Transverse colon (tissue), 4 donors: ENCODE measurements at regions of chrX and their contacts with region 1.

Region 1: GRCh38 chrX:15721911-15722310 is 16.2 kb upstream of the CA5B start:
- DNase-seq: no peak
- H3K4me3 ChIP-seq: no peak overlapping the region
- H3K27ac ChIP-seq: no peak overlapping the region
- H3K4me1 ChIP-seq: no peaks in the 10 kb centered on the region
- H3K27me3 ChIP-seq: no peaks in the 10 kb centered on the region
- CTCF ChIP-seq: no peak
- EP300 ChIP-seq: no peak
- POLR2A ChIP-seq: no peak

Region 2: GRCh38 chrX:13816643-13817627 is 1905.0 kb before region 1 on chrX and contains the start of gene GPM6B:
- in situ Hi-C with region 1: no loop called
- intact Hi-C with region 1: loop called (anchors 5 kb)
- DNase-seq: no peak
- H3K4me3 ChIP-seq: no peak within 1 kb of the TSS
- H3K27ac ChIP-seq: no peak within 1 kb of the TSS
- H3K4me1 ChIP-seq: no peaks in the 10 kb centered on the region
- H3K27me3 ChIP-seq: no peaks in the 10 kb centered on the region
- CTCF ChIP-seq: no peak
- EP300 ChIP-seq: no peak
- POLR2A ChIP-seq: no peak
- total RNA-seq, gene GPM6B: 1.5 to 7.6 (median 5.0) TPM